Activated CD4-positive, alpha-beta T cell treated with anti-CD3 and anti-CD28 coated beads for 36 hours (primary cell): ENCODE measurements at regions of chr10 and their contacts with region 1.

Region 1: DNA sequence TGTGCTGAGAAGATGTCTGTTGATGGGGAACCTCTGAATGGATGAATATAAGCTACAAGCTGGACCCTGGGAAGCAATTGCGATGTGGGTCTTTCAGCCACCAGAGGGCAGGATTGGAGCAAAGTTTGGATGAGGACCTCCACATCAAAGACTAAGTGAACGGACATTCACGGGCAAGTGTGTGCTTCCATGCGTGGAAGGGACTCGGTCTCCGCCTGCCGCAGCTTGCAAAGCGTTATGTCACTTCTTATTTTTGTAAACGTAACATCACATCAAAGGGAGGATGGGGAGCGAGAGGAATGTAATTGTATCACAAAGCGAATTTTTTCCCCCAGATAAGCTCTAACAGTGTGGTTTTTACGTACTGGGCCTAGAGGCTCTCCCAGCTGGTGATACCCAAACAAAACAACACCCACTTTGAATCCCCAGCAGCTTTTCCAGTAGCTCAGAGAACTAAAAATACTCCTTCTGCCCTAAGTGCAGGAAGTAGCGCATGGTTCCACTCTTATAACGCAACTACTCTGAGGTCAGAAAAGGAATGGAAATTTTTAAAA is 65.0 kb downstream of the VWA2 start:
- DNase-seq: peak; percentile 86
- ATAC-seq: peak; percentile 76
- H3K4me3 Mint-ChIP-seq: peak overlapping the region; percentile 69
- H3K27ac Mint-ChIP-seq: peak overlapping the region; percentile 59
- H3K4me1 Mint-ChIP-seq: peaks cover 8% of the 10 kb centered on the region
- H3K27me3 Mint-ChIP-seq: no peaks in the 10 kb centered on the region

Region 2: GRCh38 chr10:113764582-113764981 is 539.5 kb before region 1 on chr10:
- CTCF ChIA-PET with region 1: no interaction called
- POLR2A ChIA-PET with region 1: no interaction called
- intact Hi-C with region 1: no loop called
- DNase-seq: no peak
- ATAC-seq: no peak
- H3K4me3 Mint-ChIP-seq: no peak overlapping the region
- H3K27ac Mint-ChIP-seq: no peak overlapping the region
- H3K4me1 Mint-ChIP-seq: no peaks in the 10 kb centered on the region
- H3K27me3 Mint-ChIP-seq: peaks cover 20% of the 10 kb centered on the region

Region 3: GRCh38 chr10:113854011-113854760 is 449.9 kb before region 1 on chr10 and contains the starts of genes DCLRE1A and NHLRC2:
- CTCF ChIA-PET with region 1: no interaction called
- POLR2A ChIA-PET with region 1: no interaction called
- intact Hi-C with region 1: no loop called
- DNase-seq: peak; percentile 77
- ATAC-seq: peak; percentile 51
- H3K4me3 Mint-ChIP-seq: peak within 1 kb of the TSS; percentile 80
- H3K27ac Mint-ChIP-seq: peak within 1 kb of the TSS; percentile 97
- H3K4me1 Mint-ChIP-seq: peaks cover 39% of the 10 kb centered on the region
- H3K27me3 Mint-ChIP-seq: no peaks in the 10 kb centered on the region
- total RNA-seq, gene DCLRE1A: 12.5 to 14.4 TPM
- total RNA-seq, gene NHLRC2: 20.1 to 22.3 TPM

Region 4: DNA sequence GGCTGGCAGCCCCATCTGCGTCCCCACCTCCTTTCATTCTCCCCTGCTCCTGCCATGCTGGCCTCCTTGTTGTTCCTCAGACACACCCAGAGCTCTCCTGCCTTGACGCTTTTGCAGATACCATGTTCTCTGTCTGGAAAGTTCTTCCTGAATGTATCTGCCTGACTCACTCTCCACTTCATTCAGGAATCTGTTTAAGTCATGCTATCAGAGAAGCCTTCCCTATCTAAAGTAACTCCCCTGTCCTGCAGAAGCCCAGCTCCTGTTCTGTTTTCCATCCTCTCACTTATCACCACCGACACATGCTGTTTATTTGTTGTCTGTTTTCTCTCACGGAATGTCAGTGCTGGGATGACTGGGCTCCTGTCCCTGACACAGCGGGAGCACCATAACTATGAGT is 18.2 kb after region 1 on chr10:
- CTCF ChIA-PET with region 1: interaction called, 16 read pairs
- POLR2A ChIA-PET with region 1: no interaction called
- intact Hi-C with region 1: no loop called
- DNase-seq: no peak
- ATAC-seq: no peak
- H3K4me3 Mint-ChIP-seq: no peak overlapping the region
- H3K27ac Mint-ChIP-seq: no peak overlapping the region
- H3K4me1 Mint-ChIP-seq: no peaks in the 10 kb centered on the region
- H3K27me3 Mint-ChIP-seq: no peaks in the 10 kb centered on the region

Region 5: DNA sequence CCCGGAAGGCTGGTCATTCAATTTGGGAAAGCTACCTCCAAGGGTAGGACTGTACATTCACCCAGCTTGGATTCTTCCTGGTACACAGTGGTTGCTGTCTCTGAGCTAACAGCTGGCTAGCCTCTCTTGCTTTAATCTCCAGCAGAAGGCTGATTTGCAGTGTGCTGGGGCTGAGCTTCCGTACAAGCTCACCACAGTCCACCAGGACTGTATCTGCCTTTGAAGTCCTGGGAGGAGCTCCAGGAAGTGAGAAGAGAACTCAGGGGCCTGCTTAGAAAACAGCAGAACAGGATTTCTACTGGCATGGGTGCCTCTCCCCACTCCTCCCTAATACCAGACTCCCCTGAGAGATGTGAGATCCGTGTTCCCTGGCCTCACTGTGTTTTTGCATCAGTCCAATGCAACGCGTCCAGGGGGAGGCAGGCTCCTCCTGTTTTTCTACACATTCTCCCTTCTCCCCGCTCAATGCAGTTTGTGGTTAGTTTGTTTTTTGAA is 93.6 kb after region 1 on chr10:
- CTCF ChIA-PET with region 1: interaction called, 10 read pairs
- POLR2A ChIA-PET with region 1: no interaction called
- intact Hi-C with region 1: no loop called
- DNase-seq: no peak
- ATAC-seq: no peak
- H3K4me3 Mint-ChIP-seq: no peak overlapping the region
- H3K27ac Mint-ChIP-seq: no peak overlapping the region
- H3K4me1 Mint-ChIP-seq: no peaks in the 10 kb centered on the region
- H3K27me3 Mint-ChIP-seq: peaks cover 38% of the 10 kb centered on the region

Region 6: GRCh38 chr10:114458955-114459354 is 154.9 kb after region 1 on chr10:
- CTCF ChIA-PET with region 1: interaction called, 39 read pairs
- POLR2A ChIA-PET with region 1: no interaction called
- intact Hi-C with region 1: loop called (anchors 1 kb)
- DNase-seq: peak; percentile 64
- ATAC-seq: peak; percentile 63
- H3K4me3 Mint-ChIP-seq: no peak overlapping the region
- H3K27ac Mint-ChIP-seq: peak overlapping the region; percentile 43
- H3K4me1 Mint-ChIP-seq: peaks cover 16% of the 10 kb centered on the region
- H3K27me3 Mint-ChIP-seq: no peaks in the 10 kb centered on the region

Region 7: GRCh38 chr10:114694752-114695151 is 390.7 kb after region 1 on chr10:
- CTCF ChIA-PET with region 1: interaction called, 7 read pairs
- POLR2A ChIA-PET with region 1: no interaction called
- intact Hi-C with region 1: loop called in 1 of 2 experiments (anchors 2 kb)
- DNase-seq: peak; percentile 69
- ATAC-seq: no peak
- H3K4me3 Mint-ChIP-seq: no peak overlapping the region
- H3K27ac Mint-ChIP-seq: no peak overlapping the region
- H3K4me1 Mint-ChIP-seq: peaks cover 10% of the 10 kb centered on the region
- H3K27me3 Mint-ChIP-seq: peaks cover 4% of the 10 kb centered on the region

Region 8: GRCh38 chr10:114779803-114780609 is 475.9 kb after region 1 on chr10:
- CTCF ChIA-PET with region 1: interaction called, 22 read pairs
- POLR2A ChIA-PET with region 1: no interaction called
- intact Hi-C with region 1: loop called in 1 of 2 experiments (anchors 2 kb)
- DNase-seq: no peak
- ATAC-seq: peak; percentile 57
- H3K4me3 Mint-ChIP-seq: no peak overlapping the region
- H3K27ac Mint-ChIP-seq: peak overlapping the region; percentile 59
- H3K4me1 Mint-ChIP-seq: peaks cover 5% of the 10 kb centered on the region
- H3K27me3 Mint-ChIP-seq: peaks cover 3% of the 10 kb centered on the region